ENCODE measurements at regions of chr5 and their contacts with region 1.

Region 1: DNA sequence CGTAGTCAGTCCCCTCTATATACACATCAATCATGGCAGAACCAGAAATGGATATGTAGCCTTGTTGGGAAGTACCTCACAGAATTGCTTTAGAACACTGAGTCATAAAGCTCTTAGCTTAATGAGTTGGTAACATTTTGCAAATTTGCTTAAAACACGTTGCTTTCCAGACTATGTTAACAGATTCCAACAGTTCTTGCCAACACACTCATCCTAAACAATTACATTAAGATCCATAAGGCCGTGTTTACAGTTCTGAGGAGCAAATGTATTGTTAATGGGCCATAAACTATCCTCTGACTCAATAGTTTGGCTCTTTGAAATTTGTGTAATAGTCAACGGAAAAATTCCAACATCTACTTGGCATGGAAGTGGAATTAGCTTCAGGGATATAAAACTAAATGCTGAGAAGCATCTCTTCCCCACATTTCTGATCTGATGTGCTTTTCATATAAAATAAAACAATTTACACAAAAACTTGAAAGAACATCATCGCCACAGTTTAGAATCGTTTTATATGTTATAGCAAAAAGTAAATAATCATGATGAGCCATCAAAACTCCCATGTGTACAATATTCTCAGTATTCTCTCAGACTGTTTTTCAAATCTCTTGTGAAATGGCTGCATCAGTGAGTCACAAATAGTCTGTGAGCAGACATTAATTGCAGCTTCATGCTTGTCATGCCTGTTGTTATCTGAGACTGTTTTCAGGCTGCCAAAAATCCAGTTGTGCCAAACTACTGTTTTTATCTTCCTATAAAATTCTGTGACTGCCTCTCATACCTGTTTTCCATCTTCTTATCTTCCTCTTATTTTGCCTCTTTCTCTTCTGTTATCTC is 291.9 kb downstream of the COX7C start:
- DNase-seq: peak; percentile 97
- ATAC-seq: peak; percentile 90
- H3K4me3 ChIP-seq: peak overlapping the region; percentile 44
- H3K27ac ChIP-seq: peak overlapping the region; percentile 89
- H3K4me1 ChIP-seq: peaks cover 39% of the 10 kb centered on the region
- H3K27me3 ChIP-seq: no peaks in the 10 kb centered on the region
- CTCF ChIP-seq: no peak

Region 2: GRCh38 chr5:86880785-86881492 is 28.7 kb before region 1 on chr5:
- CTCF ChIA-PET with region 1: interaction called, 10 read pairs
- POLR2A ChIA-PET with region 1: no interaction called
- intact Hi-C with region 1: loop called (anchors 1 kb)
- DNase-seq: peak; percentile 96
- ATAC-seq: peak; percentile 91
- H3K4me3 ChIP-seq: no peak overlapping the region
- H3K27ac ChIP-seq: no peak overlapping the region
- H3K4me1 ChIP-seq: peaks cover 13% of the 10 kb centered on the region; the same call in 1 of the 2 replicates
- H3K27me3 ChIP-seq: no peaks in the 10 kb centered on the region
- CTCF ChIP-seq: peak; percentile 100

Region 3: GRCh38 chr5:87008751-87009560 is 99.3 kb after region 1 on chr5:
- CTCF ChIA-PET with region 1: no interaction called
- POLR2A ChIA-PET with region 1: no interaction called
- intact Hi-C with region 1: no loop called
- DNase-seq: no peak
- ATAC-seq: peak; percentile 31
- H3K4me3 ChIP-seq: no peak overlapping the region
- H3K27ac ChIP-seq: no peak overlapping the region
- H3K4me1 ChIP-seq: peaks cover 5% of the 10 kb centered on the region
- H3K27me3 ChIP-seq: no peaks in the 10 kb centered on the region
- CTCF ChIP-seq: no peak